ENCODE measurements at regions of chr1 and their contacts with region 1.

Region 1: GRCh38 chr1:110209715-110210603 is at the start of gene KCNC4:
- DNase-seq: peak; percentile 87
- ATAC-seq: peak; percentile 75
- H3K4me3 Mint-ChIP-seq: peak within 1 kb of the TSS; percentile 82
- H3K27ac Mint-ChIP-seq: peak within 1 kb of the TSS; percentile 92
- H3K4me1 Mint-ChIP-seq: peaks cover 33% of the 10 kb centered on the region
- H3K27me3 Mint-ChIP-seq: peaks cover 22% of the 10 kb centered on the region
- CTCF ChIP-seq: no peak
- total RNA-seq, gene KCNC4: 19.9 to 21.9 TPM (median 21.9 TPM) in 3 replicates

Region 2: DNA sequence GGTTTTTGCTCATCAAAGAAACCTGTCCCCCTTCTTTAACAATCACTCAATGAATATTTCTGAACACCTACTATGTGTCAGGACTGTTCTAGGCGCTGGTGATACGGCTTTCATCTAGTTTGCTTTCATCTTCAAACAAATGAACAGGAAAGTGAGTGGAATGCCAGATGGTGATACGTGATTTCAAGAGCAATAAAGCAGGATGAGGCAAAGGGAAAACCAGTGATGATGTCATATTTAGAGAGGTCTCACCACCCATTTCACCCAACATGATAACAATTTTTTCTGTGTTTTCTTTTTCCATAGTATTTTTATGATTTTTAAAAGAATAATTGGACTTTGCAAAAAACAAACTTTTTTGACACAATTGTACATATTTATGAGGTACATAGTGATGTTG is 71.0 kb before region 1 on chr1:
- CTCF ChIA-PET with region 1: no interaction called
- POLR2A ChIA-PET with region 1: no interaction called
- DNase-seq: no peak
- ATAC-seq: no peak
- H3K4me3 Mint-ChIP-seq: no peak overlapping the region
- H3K27ac Mint-ChIP-seq: no peak overlapping the region
- H3K4me1 Mint-ChIP-seq: peaks cover 22% of the 10 kb centered on the region
- H3K27me3 Mint-ChIP-seq: peaks cover 20% of the 10 kb centered on the region
- CTCF ChIP-seq: no peak

Region 3: GRCh38 chr1:110161877-110162276 is 48.1 kb before region 1 on chr1:
- CTCF ChIA-PET with region 1: no interaction called
- POLR2A ChIA-PET with region 1: no interaction called
- DNase-seq: no peak
- ATAC-seq: no peak
- H3K4me3 Mint-ChIP-seq: no peak overlapping the region
- H3K27ac Mint-ChIP-seq: no peak overlapping the region
- H3K4me1 Mint-ChIP-seq: peaks cover 11% of the 10 kb centered on the region
- H3K27me3 Mint-ChIP-seq: peaks cover 10% of the 10 kb centered on the region
- CTCF ChIP-seq: no peak

Region 4: DNA sequence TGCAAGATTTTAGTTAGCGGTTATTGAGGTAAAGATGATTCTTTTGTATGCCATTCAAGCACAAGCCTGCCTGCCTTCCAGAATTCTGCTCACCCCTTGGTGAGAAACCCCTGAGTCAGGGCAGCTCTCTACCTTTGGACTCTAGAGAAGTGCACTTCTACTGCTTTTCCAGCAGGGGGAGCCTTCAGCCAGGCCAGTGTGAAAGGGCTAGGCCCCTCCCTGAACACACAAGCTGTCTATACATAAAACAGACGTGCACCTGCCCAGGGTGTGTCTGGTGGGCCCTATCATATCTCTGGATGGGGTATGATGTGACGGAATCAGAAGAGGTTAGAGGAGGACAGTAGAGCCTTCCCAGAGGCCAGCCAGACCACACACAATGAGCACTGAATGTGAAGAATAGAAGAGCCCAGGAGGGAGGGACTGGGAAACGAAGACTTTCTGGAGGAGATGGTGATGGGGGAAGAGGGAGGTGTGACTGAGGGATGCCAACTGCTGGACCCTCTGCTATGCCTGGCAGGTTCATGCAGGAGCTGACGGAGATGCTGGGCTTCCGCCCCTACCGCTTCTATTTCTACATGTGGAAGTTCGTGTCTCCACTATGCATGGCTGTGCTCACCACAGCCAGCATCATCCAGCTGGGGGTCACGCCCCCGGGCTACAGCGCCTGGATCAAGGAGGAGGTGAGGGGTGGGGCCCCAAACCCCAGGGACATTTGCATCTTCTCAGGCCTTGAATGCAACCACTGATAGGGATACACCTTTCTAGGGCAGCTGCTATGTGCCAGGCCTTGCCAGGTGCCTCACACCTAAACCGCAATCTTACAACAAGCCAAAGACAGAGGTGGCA is 12.8 kb before region 1 on chr1:
- CTCF ChIA-PET with region 1: interaction called, 46 read pairs
- POLR2A ChIA-PET with region 1: no interaction called
- DNase-seq: peak; percentile 42
- ATAC-seq: peak; percentile 95
- H3K4me3 Mint-ChIP-seq: no peak overlapping the region
- H3K27ac Mint-ChIP-seq: no peak overlapping the region
- H3K4me1 Mint-ChIP-seq: peaks cover 2% of the 10 kb centered on the region; the same call in 1 of the 2 replicates
- H3K27me3 Mint-ChIP-seq: no peaks in the 10 kb centered on the region
- CTCF ChIP-seq: peak; percentile 87

Region 5: DNA sequence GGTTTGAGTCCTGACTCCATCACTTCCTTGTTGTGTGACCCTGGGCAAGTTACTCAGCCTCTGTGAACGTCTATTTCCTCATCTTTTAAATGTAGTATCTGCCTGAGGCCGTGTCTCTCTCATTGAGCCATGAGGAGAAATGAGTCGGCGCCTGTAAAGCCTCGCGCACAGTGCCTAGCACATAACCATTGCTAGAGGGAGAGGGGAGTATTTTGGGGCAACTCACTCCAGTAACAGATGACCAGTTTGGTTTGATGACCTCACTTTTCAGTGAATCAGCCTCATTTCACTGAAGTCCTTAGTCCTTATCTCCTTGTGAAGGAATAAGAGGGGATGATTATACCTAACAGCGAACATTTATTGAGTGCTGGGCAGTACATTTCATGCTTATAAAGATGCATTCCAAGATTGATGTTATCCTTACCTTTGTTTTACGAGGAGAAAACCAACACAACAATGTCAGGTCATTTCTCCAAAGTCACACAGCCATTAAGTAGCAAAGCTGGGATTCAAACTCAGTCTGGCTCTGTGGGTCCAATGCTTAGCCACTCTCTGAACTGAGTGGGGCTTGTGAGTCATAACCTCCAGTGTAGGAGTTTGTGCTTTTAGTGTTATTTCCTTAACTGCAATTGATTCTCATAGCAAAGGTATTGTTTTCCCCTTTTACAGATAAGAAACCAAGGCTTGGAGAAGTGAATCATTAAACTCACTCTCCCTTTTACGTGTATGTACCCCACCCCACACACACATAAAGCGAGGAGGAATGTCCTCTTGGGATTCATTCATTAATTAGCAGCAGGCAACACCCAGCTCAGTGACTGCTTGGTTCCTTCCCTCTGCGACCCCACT is 26.1 kb after region 1 on chr1:
- CTCF ChIA-PET with region 1: interaction called, 31 read pairs
- POLR2A ChIA-PET with region 1: no interaction called
- DNase-seq: no peak
- ATAC-seq: no peak
- H3K4me3 Mint-ChIP-seq: no peak overlapping the region
- H3K27ac Mint-ChIP-seq: peak overlapping the region; percentile 36; the same call in 1 of the 2 replicates
- H3K4me1 Mint-ChIP-seq: peaks cover 18% of the 10 kb centered on the region
- H3K27me3 Mint-ChIP-seq: no peaks in the 10 kb centered on the region
- CTCF ChIP-seq: no peak

Region 6: GRCh38 chr1:110281363-110282290 is 71.7 kb after region 1 on chr1:
- CTCF ChIA-PET with region 1: interaction called, 34 read pairs
- POLR2A ChIA-PET with region 1: no interaction called
- DNase-seq: no peak
- ATAC-seq: no peak
- H3K4me3 Mint-ChIP-seq: no peak overlapping the region
- H3K27ac Mint-ChIP-seq: no peak overlapping the region
- H3K4me1 Mint-ChIP-seq: peaks cover 3% of the 10 kb centered on the region; the same call in 1 of the 2 replicates
- H3K27me3 Mint-ChIP-seq: peaks cover 2% of the 10 kb centered on the region
- CTCF ChIP-seq: no peak

Region 7: GRCh38 chr1:110305900-110306420 is 96.0 kb after region 1 on chr1:
- CTCF ChIA-PET with region 1: interaction called, 759 read pairs
- POLR2A ChIA-PET with region 1: interaction called, 3 read pairs
- DNase-seq: no peak
- ATAC-seq: no peak
- H3K4me3 Mint-ChIP-seq: no peak overlapping the region
- H3K27ac Mint-ChIP-seq: no peak overlapping the region
- H3K4me1 Mint-ChIP-seq: peaks cover 13% of the 10 kb centered on the region
- H3K27me3 Mint-ChIP-seq: peaks cover 10% of the 10 kb centered on the region
- CTCF ChIP-seq: no peak

Region 8: DNA sequence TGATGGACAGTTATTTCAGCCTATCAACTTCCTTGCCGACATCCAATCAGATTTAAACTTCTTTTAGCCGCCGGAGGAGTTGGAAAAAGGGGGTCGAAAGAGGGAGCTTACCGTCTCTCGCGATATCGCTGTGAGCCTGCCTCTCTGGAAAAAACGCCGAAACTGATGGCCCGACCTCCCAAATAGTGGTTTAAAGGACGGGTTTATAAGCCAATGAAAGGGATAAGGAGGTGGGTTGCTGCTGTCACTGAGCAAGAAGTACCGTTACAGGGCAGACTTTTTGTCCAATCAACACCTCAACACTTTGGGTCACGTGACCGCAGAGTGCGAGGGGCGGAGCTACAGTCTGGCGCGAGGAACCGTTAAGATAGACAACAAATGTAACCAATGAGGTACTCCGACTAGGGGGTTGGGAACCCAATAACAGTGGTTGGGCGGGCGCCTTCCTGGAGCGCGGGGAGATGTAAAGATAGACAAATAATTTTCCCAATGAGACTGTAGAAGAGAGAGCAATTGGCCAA is 129.0 kb after region 1 on chr1 and contains the start of gene RBM15:
- CTCF ChIA-PET with region 1: interaction called, 100 read pairs
- POLR2A ChIA-PET with region 1: interaction called, 12 read pairs
- DNase-seq: peak; percentile 96
- ATAC-seq: peak; percentile 84
- H3K4me3 Mint-ChIP-seq: no peak within 1 kb of the TSS
- H3K27ac Mint-ChIP-seq: no peak within 1 kb of the TSS; the same call in 1 of the 2 replicates
- H3K4me1 Mint-ChIP-seq: peaks cover 52% of the 10 kb centered on the region
- H3K27me3 Mint-ChIP-seq: no peaks in the 10 kb centered on the region
- CTCF ChIP-seq: no peak
- total RNA-seq, gene RBM15: 43.5 to 50.6 TPM (median 44.8 TPM) in 3 replicates

Region 9: GRCh38 chr1:110460253-110461220 is 250.6 kb after region 1 on chr1:
- CTCF ChIA-PET with region 1: interaction called, 132 read pairs
- POLR2A ChIA-PET with region 1: no interaction called
- DNase-seq: peak; percentile 88
- ATAC-seq: peak; percentile 87
- H3K4me3 Mint-ChIP-seq: no peak overlapping the region
- H3K27ac Mint-ChIP-seq: no peak overlapping the region
- H3K4me1 Mint-ChIP-seq: no peaks in the 10 kb centered on the region
- H3K27me3 Mint-ChIP-seq: no peaks in the 10 kb centered on the region; the same call in 1 of the 2 replicates
- CTCF ChIP-seq: peak; percentile 81

Measured in WTC11 (cell line).